ENCODE measurements at regions of chr20 and their contacts with region 1.

Region 1: DNA sequence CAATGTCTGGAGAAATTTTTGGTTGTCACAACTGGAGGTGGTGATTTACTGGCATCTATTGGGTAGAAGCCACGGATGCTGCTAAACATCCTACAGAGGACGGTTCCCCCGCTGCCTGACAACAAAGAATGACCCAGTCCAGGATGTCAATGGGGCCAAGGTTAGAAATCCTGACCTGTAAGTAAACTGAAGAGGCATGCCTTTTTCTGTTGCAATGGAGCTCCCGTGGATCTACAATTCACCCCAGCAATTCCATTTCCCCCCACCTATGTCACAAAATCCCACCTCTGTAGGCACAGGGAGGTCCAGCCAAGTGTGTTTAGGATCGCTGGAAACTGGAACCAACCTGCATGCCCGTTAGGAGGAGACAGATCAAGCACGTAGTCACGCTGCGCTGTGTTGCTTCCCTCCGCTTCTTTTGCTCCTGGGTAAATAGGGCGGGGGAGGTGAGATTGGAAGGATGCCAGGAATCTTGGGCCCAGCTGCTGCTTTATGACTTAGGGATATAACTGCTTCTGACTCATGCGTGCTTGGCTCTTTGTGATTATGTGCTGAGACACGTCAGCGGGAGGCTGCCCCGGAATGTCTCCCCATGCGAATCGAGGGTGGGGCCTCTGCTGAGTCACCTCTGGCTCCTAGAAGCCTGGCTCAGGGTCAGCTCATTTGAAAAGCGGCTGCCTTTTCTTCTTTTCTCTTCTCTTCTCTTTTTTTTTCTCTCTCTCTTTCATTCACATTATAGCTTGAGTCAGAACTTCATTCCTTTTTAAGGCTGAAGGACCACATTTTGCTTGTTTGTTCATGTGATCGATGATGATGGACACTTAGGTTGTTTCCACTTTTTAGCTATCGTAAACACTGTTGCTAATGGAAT is 12.4 kb upstream of the PEDS1 start:
- DNase-seq: peak in 6 of 9 donors; percentile 15 to 76 (median 36)
- ATAC-seq: peak; percentile 94
- H3K4me3 ChIP-seq: no peak overlapping the region
- H3K4me3 Mint-ChIP-seq: peak overlapping the region; percentile 5 to 86 (median 48)
- H3K27ac ChIP-seq: no peak overlapping the region
- H3K27ac Mint-ChIP-seq: peak overlapping the region in 4 of 9 donors; percentile 14 to 85 (median 44)
- H3K4me1 ChIP-seq: no peaks in the 10 kb centered on the region
- H3K4me1 Mint-ChIP-seq: peaks cover 7 to 16% (median 13%) of the 10 kb centered on the region in 7 donors
- H3K27me3 ChIP-seq: no peaks in the 10 kb centered on the region
- H3K27me3 Mint-ChIP-seq: peaks cover 0 to 10% (median 5%) of the 10 kb centered on the region in 5 donors

Region 2: GRCh38 chr20:50070991-50071888 is 94.7 kb before region 1 on chr20:
- CTCF ChIA-PET with region 1: no interaction called
- POLR2A ChIA-PET with region 1: no interaction called
- intact Hi-C with region 1: loop called in 1 of 2 experiments (anchors 1 kb)
- DNase-seq: peak; percentile 75 to 99 (median 88)
- ATAC-seq: peak; percentile 100
- H3K4me3 ChIP-seq: peak overlapping the region; percentile 51
- H3K4me3 Mint-ChIP-seq: peak overlapping the region; percentile 59 to 87 (median 72)
- H3K27ac ChIP-seq: no peak overlapping the region
- H3K27ac Mint-ChIP-seq: peak overlapping the region in 1 of 9 donors; percentile 18
- H3K4me1 ChIP-seq: peaks cover 0 to 4% of the 10 kb centered on the region in 2 donors
- H3K4me1 Mint-ChIP-seq: peaks cover 0 to 5% (median 5%) of the 10 kb centered on the region in 7 donors
- H3K27me3 ChIP-seq: no peaks in the 10 kb centered on the region
- H3K27me3 Mint-ChIP-seq: peaks cover 0 to 5% (median 4%) of the 10 kb centered on the region in 5 donors

Region 3: DNA sequence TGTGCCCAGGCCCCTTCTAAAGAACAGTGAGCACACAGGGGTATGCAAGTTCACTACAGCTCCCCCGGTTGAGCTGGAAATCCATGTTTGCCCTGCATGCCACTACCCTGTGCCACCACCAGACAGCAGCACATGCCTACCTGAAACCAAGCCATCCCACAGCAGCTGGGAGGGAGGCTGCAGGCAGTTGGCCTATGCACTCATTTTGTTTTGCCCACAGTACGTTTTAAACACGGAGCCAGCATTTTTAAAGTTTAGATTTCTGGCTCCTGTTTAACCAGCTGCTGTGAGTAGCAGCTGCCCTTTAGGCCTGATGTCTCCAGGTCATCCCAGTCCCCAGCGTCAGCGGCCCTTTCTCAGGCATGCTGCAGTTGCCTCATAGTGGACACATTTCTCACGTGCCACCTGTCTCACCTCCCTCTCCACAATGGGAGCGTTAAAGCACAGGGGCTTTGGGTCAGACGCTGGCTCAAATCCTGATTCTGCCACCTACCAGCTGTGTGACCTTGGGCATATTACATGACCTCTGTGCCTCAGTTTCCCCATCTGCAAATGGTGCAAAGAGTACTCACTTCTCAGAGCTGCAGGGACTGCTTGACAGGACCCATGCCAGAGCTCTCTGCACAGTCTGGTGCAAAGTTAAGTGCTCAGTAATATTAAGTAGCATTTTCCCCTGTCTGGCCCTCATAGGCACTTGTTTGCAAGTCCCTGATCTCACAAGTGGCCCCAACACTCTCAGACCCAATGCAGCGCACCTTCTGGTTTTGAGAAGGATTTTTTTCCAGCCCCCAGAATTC is 44.8 kb before region 1 on chr20:
- CTCF ChIA-PET with region 1: interaction called, 236 read pairs
- POLR2A ChIA-PET with region 1: interaction called, 23 read pairs
- intact Hi-C with region 1: loop called (anchors 1 kb)
- DNase-seq: peak; percentile 36 to 78 (median 63)
- ATAC-seq: peak; percentile 90
- H3K4me3 ChIP-seq: no peak overlapping the region
- H3K4me3 Mint-ChIP-seq: no peak overlapping the region
- H3K27ac ChIP-seq: no peak overlapping the region
- H3K27ac Mint-ChIP-seq: peak overlapping the region in 2 of 9 donors; percentile 26 to 51
- H3K4me1 ChIP-seq: peaks cover 5% of the 10 kb centered on the region in 2 donors
- H3K4me1 Mint-ChIP-seq: peaks cover 4 to 14% (median 7%) of the 10 kb centered on the region in 7 donors
- H3K27me3 ChIP-seq: no peaks in the 10 kb centered on the region
- H3K27me3 Mint-ChIP-seq: no peaks in the 10 kb centered on the region

Region 4: GRCh38 chr20:50153485-50154377 is 12.2 kb before region 1 on chr20 and contains the start of gene PEDS1:
- CTCF ChIA-PET with region 1: interaction called, 31 read pairs
- POLR2A ChIA-PET with region 1: interaction called, 19 read pairs
- intact Hi-C with region 1: loop called (anchors 1 kb)
- DNase-seq: peak; percentile 72 to 89 (median 81)
- ATAC-seq: peak; percentile 99
- H3K4me3 ChIP-seq: peak within 1 kb of the TSS; percentile 91
- H3K4me3 Mint-ChIP-seq: peak within 1 kb of the TSS; percentile 81 to 93 (median 89)
- H3K27ac ChIP-seq: peak within 1 kb of the TSS; percentile 93
- H3K27ac Mint-ChIP-seq: peak within 1 kb of the TSS; percentile 87 to 98 (median 93)
- H3K4me1 ChIP-seq: peaks cover 22 to 24% of the 10 kb centered on the region in 2 donors
- H3K4me1 Mint-ChIP-seq: peaks cover 38 to 50% (median 43%) of the 10 kb centered on the region in 7 donors
- H3K27me3 ChIP-seq: no peaks in the 10 kb centered on the region
- H3K27me3 Mint-ChIP-seq: no peaks in the 10 kb centered on the region
- total RNA-seq, gene PEDS1: 16.0 to 27.6 (median 20.8) TPM